ENCODE measurements at regions of chr18 and their contacts with region 1.

Region 1: GRCh38 chr18:6476190-6476589 is 61.5 kb upstream of the L3MBTL4 start:
- DNase-seq: no peak
- ATAC-seq: no peak
- H3K4me3 ChIP-seq: no peak overlapping the region
- H3K27ac ChIP-seq: no peak overlapping the region
- H3K4me1 ChIP-seq: peaks cover 0 to 16% (median 0%) of the 10 kb centered on the region in 9 donors
- H3K27me3 ChIP-seq: peaks cover 0 to 8% (median 0%) of the 10 kb centered on the region in 7 donors
- CTCF ChIP-seq: no peak

Region 2: GRCh38 chr18:6414118-6414722 is 62.0 kb before region 1 on chr18:
- intact Hi-C with region 1: loop called in 1 of 10 experiments (anchors 5 kb)
- DNase-seq: peak; percentile 60 to 63
- ATAC-seq: peak; percentile 81 to 95 (median 89)
- H3K4me3 ChIP-seq: peak overlapping the region; percentile 56 to 87 (median 78)
- H3K27ac ChIP-seq: peak overlapping the region in 9 of 10 donors; percentile 54 to 88 (median 74)
- H3K4me1 ChIP-seq: peaks cover 0 to 16% (median 9%) of the 10 kb centered on the region in 9 donors
- H3K27me3 ChIP-seq: peaks cover 8 to 28% (median 16%) of the 10 kb centered on the region in 7 donors
- CTCF ChIP-seq: peak in 4 of 9 donors; percentile 11 to 40 (median 34)

Measured in heart right ventricle (tissue), 16 donors.